Activated naive CD4-positive, alpha-beta T cell treated with anti-CD3 and anti-CD28 coated beads, Interleukin-2, amount 10 ng/mL, durations not matched to agents 7 days and 5 days (primary cell): ENCODE measurements at regions of chr20 and their contacts with region 1.

Region 1: DNA sequence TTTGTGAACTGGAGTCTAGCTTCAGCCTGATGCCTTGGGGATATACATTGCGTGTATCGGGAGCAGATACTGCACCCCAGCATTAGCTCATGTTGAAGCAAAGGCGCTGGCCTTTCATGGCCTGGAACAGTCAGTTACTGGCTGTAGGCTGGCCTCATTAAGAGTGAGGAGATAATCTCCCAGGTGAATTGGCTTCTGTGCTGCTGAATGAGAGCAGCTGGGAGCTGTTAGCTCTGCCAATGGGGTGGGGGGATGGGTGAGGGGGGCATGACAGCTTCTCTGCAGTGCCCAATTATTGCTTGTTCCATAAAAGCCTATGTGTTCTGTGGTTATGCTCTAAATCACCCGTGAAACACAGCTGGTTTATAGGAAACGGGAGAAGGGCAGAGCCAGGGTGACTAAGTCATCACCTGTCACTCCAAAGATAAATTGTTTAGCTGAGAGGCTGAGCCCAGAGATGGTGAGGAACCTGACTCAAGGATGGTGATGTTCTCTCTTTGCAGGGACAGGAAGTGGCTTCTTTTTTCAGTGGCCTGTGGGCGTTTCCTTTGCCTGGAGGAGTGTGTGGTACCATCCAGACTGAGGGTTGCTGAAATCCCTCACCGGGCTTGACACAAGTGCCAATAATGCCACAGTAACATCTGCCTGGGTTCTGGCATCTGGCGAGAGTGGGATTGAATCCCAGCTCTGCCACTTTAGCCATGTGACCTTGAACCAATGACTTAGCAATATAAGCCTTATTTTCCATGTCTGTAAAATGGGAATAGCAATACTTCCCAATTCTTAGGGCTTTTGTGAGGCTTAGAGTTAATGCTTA is 170.8 kb downstream of the BCAS1 start:
- DNase-seq: peak; percentile 88
- H3K4me3 Mint-ChIP-seq: no peak overlapping the region
- H3K27ac Mint-ChIP-seq: peak overlapping the region; percentile 92
- H3K4me1 Mint-ChIP-seq: peaks cover 62% of the 10 kb centered on the region
- H3K27me3 Mint-ChIP-seq: no peaks in the 10 kb centered on the region

Region 2: DNA sequence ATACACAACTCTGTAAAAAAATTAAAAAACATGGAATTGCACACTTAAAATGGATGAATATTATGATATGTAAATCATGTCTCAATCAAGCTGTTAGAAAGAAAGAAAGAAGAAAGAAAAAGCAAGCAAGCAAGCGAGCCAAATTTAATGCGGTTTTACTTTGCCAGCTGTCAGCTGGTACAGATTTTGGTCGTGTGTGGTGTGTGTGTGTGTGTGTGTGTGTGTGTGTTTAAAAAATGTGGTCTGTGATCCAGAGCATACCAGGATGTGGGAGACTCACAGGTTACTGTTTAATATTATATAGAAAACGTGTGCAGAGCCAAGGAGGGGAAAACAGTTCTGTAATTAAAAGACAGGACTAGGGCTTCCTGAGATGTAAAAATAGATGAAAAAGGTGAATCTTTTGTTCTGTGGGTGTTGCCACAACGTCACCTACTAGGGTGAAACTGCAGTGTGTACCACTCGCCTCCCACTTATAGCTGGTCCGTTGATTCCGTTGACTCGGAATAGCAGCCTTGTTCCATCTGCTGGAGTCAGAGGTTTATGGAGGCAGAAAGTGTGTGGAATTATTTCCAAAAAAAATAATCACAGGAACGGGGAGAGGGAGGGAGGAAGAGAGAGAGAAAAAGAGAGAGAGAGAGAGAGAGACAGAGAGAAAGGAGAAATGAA is 26.9 kb before region 1 on chr20:
- CTCF ChIA-PET with region 1: interaction called, 12 read pairs
- DNase-seq: peak; percentile 72
- H3K4me3 Mint-ChIP-seq: peak overlapping the region; percentile 76
- H3K27ac Mint-ChIP-seq: peak overlapping the region; percentile 98
- H3K4me1 Mint-ChIP-seq: peaks cover 63% of the 10 kb centered on the region
- H3K27me3 Mint-ChIP-seq: peaks cover 11% of the 10 kb centered on the region